ENCODE measurements at regions of chr7 and their contacts with region 1.

Region 1: GRCh38 chr7:42292971-42293521 is 56.0 kb upstream of the GLI3 start:
- H3K4me3 Mint-ChIP-seq: no peak overlapping the region
- H3K27ac Mint-ChIP-seq: no peak overlapping the region
- H3K4me1 Mint-ChIP-seq: no peaks in the 10 kb centered on the region
- H3K27me3 Mint-ChIP-seq: peaks cover 4% of the 10 kb centered on the region

Region 2: GRCh38 chr7:42237162-42237821 is 55.8 kb before region 1 on chr7 and contains the start of gene GLI3:
- intact Hi-C with region 1: loop called (anchors 10 kb)
- H3K4me3 Mint-ChIP-seq: peak within 1 kb of the TSS; percentile 86
- H3K27ac Mint-ChIP-seq: no peak within 1 kb of the TSS
- H3K4me1 Mint-ChIP-seq: peaks cover 23% of the 10 kb centered on the region
- H3K27me3 Mint-ChIP-seq: peaks cover 80% of the 10 kb centered on the region